ENCODE measurements at regions of chr19 and their contacts with region 1.

Region 1: GRCh38 chr19:55632463-55632834 is 8.1 kb upstream of the ZNF784 start:
- DNase-seq: peak; percentile 93
- ATAC-seq: peak; percentile 43
- H3K4me3 Mint-ChIP-seq: peak overlapping the region; percentile 30
- H3K27ac Mint-ChIP-seq: peak overlapping the region; percentile 37
- H3K4me1 Mint-ChIP-seq: peaks cover 37% of the 10 kb centered on the region
- H3K27me3 Mint-ChIP-seq: no peaks in the 10 kb centered on the region

Region 2: DNA sequence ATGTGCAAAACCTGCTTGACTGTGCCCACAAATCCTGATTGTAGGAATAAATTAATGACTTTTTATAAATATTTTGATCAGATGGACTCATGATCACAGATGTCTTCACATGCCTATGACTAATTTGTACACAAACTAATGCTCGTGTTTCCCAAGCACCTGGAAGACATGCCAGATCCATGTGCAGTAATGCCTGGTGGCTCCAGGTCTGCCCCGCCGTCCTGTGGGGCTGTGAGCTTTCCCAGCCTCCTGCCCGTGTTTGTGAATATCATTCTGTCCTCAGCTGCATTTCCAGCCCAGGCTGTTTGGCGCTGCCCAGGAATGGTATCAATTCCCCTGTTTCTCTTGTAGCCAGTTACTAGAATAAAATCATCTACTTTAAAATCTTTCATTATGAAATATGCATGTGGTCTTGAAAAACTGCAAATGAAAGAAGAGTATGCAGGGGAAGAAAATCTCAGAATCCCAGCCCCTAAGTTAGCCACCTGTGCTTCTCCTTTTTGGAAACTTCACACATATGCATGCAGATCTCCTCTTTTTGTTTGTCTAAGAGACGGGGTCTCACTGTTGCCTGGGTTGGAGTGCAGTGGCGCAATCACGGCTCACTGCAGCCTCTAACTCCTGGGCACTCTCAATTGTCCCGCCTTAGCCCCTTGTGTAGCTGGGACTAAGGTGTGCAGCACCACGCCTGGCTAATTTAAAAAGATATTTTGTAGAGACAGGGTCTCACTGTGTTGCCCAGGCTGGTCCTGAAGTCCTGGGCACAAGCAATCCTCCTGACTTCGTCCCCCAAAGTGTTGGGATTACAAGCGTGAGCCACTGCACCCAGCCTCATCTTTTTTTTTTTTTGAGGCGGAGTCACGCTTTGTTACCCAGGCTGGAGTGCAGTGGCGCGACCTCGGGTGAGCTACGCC is 240.5 kb before region 1 on chr19:
- CTCF ChIA-PET with region 1: no interaction called
- POLR2A ChIA-PET with region 1: no interaction called
- intact Hi-C with region 1: no loop called
- DNase-seq: no peak
- ATAC-seq: no peak
- H3K4me3 Mint-ChIP-seq: no peak overlapping the region
- H3K27ac Mint-ChIP-seq: no peak overlapping the region
- H3K4me1 Mint-ChIP-seq: peaks cover 29% of the 10 kb centered on the region
- H3K27me3 Mint-ChIP-seq: no peaks in the 10 kb centered on the region

Region 3: DNA sequence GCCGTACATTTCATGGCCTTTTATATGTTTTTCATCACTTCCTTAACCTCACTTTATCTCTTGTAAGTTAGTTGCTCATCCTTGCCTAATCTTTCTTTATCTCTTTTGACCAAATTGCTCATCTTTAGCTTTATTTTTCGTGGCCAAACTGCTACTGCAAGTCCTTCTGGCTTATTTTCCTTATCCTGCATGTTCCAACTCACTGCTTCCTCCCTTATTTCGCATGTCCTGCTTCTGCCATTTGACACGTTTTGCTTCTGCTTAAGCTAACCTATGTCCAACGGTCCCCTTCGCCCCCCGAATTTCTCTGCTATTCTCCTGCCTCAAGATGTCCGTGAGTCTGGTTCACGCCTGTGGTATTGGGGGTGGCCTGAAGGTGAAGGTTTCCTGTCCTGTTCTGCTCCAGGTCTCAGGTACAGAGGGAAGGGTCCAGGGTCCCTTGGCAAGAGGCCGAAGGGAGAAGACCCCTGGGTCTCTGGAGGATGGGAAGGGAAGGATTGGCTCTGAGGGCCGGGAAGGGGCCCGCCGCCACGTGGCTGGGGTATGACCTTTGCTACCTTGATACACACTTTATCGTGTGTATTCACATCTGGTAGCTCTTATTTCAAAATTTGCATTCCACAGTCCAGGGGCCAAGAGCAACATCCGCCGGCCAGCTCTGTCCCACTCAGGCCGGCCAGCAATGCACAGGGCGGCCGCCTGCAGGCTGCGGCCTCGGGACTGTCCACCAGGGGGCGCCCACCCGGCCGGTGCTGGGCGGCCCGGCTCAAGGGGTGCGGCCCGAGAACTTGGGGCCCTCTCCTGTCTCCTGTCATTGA is 165.0 kb before region 1 on chr19:
- CTCF ChIA-PET with region 1: interaction called, 6 read pairs
- POLR2A ChIA-PET with region 1: no interaction called
- intact Hi-C with region 1: loop called (anchors 2 to 5 kb)
- DNase-seq: peak; percentile 83
- ATAC-seq: peak; percentile 98
- H3K4me3 Mint-ChIP-seq: no peak overlapping the region
- H3K27ac Mint-ChIP-seq: no peak overlapping the region
- H3K4me1 Mint-ChIP-seq: peaks cover 3% of the 10 kb centered on the region
- H3K27me3 Mint-ChIP-seq: no peaks in the 10 kb centered on the region

Region 4: GRCh38 chr19:55516878-55517620 is 115.4 kb before region 1 on chr19:
- CTCF ChIA-PET with region 1: interaction called, 22 read pairs
- POLR2A ChIA-PET with region 1: no interaction called
- intact Hi-C with region 1: loop called (anchors 1 kb)
- DNase-seq: peak; percentile 96
- ATAC-seq: peak; percentile 100
- H3K4me3 Mint-ChIP-seq: peak overlapping the region; percentile 54
- H3K27ac Mint-ChIP-seq: peak overlapping the region; percentile 9
- H3K4me1 Mint-ChIP-seq: peaks cover 3% of the 10 kb centered on the region
- H3K27me3 Mint-ChIP-seq: no peaks in the 10 kb centered on the region

Region 5: GRCh38 chr19:55586976-55587668 is 45.3 kb before region 1 on chr19:
- CTCF ChIA-PET with region 1: interaction called, 11 read pairs
- POLR2A ChIA-PET with region 1: no interaction called
- intact Hi-C with region 1: no loop called
- DNase-seq: peak; percentile 97
- ATAC-seq: peak; percentile 99
- H3K4me3 Mint-ChIP-seq: peak overlapping the region; percentile 71
- H3K27ac Mint-ChIP-seq: peak overlapping the region; percentile 37
- H3K4me1 Mint-ChIP-seq: peaks cover 20% of the 10 kb centered on the region
- H3K27me3 Mint-ChIP-seq: no peaks in the 10 kb centered on the region

Region 6: DNA sequence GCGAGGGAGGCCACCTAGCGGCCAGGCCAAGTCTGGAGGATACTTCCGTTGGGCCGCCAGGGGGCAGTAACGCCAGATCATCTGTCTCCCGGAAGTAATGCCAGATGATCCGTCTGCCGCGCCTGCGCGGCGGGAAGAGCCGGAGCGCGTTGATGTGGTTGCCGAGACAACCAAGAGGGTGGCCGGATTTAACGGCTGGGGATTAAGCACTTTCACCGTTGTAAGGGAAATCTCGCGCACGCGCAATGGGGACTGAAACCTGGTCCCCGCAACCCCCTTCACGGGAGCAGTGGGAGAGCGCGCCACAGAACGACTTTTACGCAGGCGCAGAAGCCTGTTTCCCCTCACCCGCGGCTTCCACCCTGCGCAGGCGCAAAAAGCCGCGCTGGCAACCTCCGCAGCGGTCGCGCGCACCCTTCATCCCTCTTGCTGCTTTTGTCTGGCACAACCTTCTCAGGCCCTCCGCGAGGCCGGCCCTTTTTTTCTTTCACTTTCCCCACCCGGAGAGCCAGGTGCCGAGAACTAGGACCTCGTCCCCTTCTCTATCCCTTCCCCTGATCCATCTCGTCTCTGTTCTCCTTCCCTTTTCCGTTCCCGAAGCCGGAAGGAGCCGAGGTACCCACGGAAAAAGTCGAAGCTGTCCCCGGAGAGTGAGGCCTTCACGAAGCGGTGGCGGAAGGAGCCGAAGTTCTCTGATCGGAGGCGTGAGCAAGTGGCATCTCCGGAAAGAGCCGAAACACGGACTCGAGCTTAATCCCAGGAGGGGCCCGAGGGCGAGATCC is 21.5 kb after region 1 on chr19:
- CTCF ChIA-PET with region 1: interaction called, 24 read pairs
- POLR2A ChIA-PET with region 1: interaction called, 9 read pairs
- intact Hi-C with region 1: loop called in 1 of 2 experiments (anchors 1 kb)
- DNase-seq: peak; percentile 99
- ATAC-seq: peak; percentile 84
- H3K4me3 Mint-ChIP-seq: peak overlapping the region; percentile 86
- H3K27ac Mint-ChIP-seq: peak overlapping the region; percentile 98
- H3K4me1 Mint-ChIP-seq: peaks cover 37% of the 10 kb centered on the region
- H3K27me3 Mint-ChIP-seq: no peaks in the 10 kb centered on the region

Region 7: DNA sequence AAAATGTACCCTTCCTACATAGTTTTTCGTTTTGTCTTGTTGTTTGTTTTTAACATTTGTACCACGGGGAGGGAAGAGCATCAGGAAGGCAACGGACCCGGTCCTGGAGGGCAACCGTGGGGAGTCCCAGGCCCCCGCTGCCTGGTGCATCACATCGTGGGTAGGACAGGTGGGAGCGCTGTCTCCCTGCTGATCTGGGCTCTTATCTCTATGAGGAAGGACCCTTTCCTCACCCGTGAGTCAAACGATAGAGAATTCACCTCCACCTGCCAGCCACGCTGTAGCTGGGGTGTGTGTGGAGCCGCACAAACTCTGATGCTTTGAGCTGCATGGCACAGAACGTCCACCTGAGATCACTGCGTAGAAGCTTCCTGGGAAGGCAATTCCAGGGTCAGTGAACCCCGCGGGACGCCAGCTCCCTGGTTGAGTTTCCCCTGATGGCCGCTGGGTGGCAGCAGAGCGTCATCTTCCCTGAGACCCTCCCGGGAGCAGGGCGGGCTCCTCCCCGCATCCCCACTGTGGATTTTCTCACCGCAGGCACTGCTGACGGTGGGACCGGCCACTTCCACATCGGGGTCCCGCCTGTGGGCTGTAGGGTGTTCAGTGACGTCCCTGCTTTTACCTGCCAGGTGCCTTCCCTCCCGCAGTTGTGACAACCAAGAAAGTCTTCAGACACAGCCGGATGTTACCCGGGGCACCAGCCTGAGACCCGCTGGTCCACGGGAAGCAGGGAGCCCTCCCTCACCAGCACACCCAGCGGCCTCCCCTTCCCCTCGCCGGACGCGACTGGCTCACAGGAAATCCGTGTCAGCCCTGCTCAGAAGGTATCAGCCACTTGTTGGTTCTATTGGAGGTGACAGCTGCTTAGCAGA is 433.9 kb after region 1 on chr19:
- CTCF ChIA-PET with region 1: no interaction called
- POLR2A ChIA-PET with region 1: no interaction called
- intact Hi-C with region 1: loop called in 1 of 2 experiments (anchors 5 kb)
- DNase-seq: peak; percentile 75
- ATAC-seq: peak; percentile 69
- H3K4me3 Mint-ChIP-seq: peak overlapping the region; percentile 50
- H3K27ac Mint-ChIP-seq: no peak overlapping the region
- H3K4me1 Mint-ChIP-seq: peaks cover 11% of the 10 kb centered on the region
- H3K27me3 Mint-ChIP-seq: peaks cover 16% of the 10 kb centered on the region